ENCODE measurements at regions of chr9 and their contacts with region 1.

Region 1: DNA sequence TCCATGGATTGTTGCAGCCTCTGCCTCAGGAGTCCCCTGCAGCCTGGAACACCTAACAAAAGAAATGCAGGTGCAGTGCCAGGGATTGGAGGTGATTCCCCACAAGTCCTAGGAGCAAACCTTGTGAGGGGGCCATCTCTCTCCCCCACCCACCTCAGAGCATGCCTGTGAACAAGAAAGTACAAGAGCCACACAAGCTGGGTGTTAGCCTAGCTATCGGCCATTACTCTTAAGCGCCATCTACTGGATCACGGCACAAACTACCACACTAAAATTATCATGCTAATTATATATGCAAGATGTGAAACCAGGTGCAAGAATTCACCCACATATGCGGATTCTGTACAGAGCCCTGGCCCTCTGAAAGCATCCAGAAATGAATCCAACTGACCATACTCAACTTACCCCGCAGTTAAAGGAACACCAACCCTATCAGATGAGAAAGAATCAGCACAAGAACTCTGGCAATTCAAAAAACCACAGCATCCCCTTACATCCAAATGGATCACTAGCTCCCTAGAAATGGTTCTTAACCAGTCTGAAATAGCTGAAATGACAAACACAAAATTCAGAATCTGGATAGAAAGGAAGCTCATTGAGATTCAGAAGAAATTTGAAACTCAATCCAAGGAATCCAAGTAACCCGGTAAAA is 16.5 kb upstream of the PRSS3 start:
- DNase-seq: peak; percentile 55
- ATAC-seq: peak; percentile 98
- H3K4me3 Mint-ChIP-seq: no peak overlapping the region
- H3K27ac Mint-ChIP-seq: no peak overlapping the region
- H3K4me1 Mint-ChIP-seq: no peaks in the 10 kb centered on the region
- H3K27me3 Mint-ChIP-seq: peaks cover 3% of the 10 kb centered on the region
- CTCF ChIP-seq: peak; percentile 44

Region 2: DNA sequence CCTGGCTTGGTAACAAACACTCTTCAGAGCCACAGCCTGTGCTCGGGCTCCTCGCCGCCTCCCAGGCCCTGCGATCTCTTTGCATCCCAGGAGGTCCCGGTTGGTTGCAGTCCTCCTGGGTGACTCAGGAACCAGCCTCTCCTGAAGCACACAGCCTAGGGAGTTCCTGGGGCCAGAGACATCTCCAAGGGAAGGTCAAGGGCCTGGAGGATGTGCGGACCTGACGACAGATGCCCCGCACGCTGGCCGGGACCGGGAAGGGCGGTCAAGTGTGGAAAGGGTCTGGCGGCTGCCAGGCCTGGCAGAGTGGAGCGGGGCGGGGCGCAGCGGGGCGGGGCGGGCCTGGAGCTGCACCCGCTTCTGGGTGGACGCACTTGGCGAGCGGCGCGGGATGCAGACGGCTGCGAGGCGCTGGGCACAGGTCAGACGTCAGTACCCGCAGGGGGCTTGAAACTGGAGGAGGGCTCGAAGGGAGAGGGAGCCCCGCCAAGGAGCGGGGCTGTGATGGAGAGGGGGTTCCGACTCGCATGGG is 28.5 kb before region 1 on chr9:
- CTCF ChIA-PET with region 1: interaction called, 19 read pairs
- POLR2A ChIA-PET with region 1: no interaction called
- DNase-seq: peak; percentile 23
- ATAC-seq: peak; percentile 69
- H3K4me3 Mint-ChIP-seq: peak overlapping the region; percentile 69
- H3K27ac Mint-ChIP-seq: no peak overlapping the region
- H3K4me1 Mint-ChIP-seq: peaks cover 6% of the 10 kb centered on the region
- H3K27me3 Mint-ChIP-seq: peaks cover 48% of the 10 kb centered on the region
- CTCF ChIP-seq: no peak

Region 3: DNA sequence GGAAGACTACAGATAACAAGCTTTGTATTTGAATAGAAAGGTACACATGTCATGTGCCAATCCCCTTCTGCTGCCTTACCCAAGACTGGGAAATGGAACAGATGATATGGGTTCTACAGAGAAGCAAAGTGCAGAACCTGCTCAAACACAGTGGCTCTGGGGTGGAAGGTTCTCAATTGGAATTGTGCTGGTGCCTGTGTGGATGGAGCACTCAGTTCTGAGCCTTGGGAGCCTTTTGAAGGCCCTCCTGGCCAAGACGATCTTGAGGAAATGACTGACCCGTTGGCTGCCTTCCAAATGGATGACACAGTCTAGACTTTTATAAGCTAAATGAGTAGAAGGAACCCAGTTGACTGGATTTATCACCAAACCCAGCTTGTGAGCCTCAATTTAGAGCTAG is 12.3 kb after region 1 on chr9:
- CTCF ChIA-PET with region 1: interaction called, 27 read pairs
- POLR2A ChIA-PET with region 1: no interaction called
- DNase-seq: no peak
- ATAC-seq: no peak
- H3K4me3 Mint-ChIP-seq: no peak overlapping the region
- H3K27ac Mint-ChIP-seq: no peak overlapping the region
- H3K4me1 Mint-ChIP-seq: peaks cover 9% of the 10 kb centered on the region
- H3K27me3 Mint-ChIP-seq: peaks cover 3% of the 10 kb centered on the region
- CTCF ChIP-seq: no peak

Region 4: GRCh38 chr9:33799928-33800704 is 21.3 kb after region 1 on chr9:
- CTCF ChIA-PET with region 1: interaction called, 27 read pairs
- POLR2A ChIA-PET with region 1: no interaction called
- DNase-seq: no peak
- ATAC-seq: no peak
- H3K4me3 Mint-ChIP-seq: no peak overlapping the region
- H3K27ac Mint-ChIP-seq: no peak overlapping the region
- H3K4me1 Mint-ChIP-seq: peaks cover 13% of the 10 kb centered on the region
- H3K27me3 Mint-ChIP-seq: peaks cover 5% of the 10 kb centered on the region
- CTCF ChIP-seq: no peak

Region 5: GRCh38 chr9:33894316-33894715 is 115.5 kb after region 1 on chr9:
- CTCF ChIA-PET with region 1: no interaction called
- POLR2A ChIA-PET with region 1: no interaction called
- DNase-seq: no peak
- ATAC-seq: no peak
- H3K4me3 Mint-ChIP-seq: no peak overlapping the region
- H3K27ac Mint-ChIP-seq: no peak overlapping the region
- H3K4me1 Mint-ChIP-seq: no peaks in the 10 kb centered on the region
- H3K27me3 Mint-ChIP-seq: no peaks in the 10 kb centered on the region
- CTCF ChIP-seq: no peak

Region 6: GRCh38 chr9:33913541-33913940 is 134.7 kb after region 1 on chr9:
- CTCF ChIA-PET with region 1: no interaction called
- POLR2A ChIA-PET with region 1: no interaction called
- DNase-seq: no peak
- ATAC-seq: no peak
- H3K4me3 Mint-ChIP-seq: no peak overlapping the region
- H3K27ac Mint-ChIP-seq: no peak overlapping the region
- H3K4me1 Mint-ChIP-seq: peaks cover 20% of the 10 kb centered on the region
- H3K27me3 Mint-ChIP-seq: no peaks in the 10 kb centered on the region
- CTCF ChIP-seq: no peak